GM12878 (cell line): ENCODE measurements at regions of chr2 and their contacts with region 1.

Region 1: DNA sequence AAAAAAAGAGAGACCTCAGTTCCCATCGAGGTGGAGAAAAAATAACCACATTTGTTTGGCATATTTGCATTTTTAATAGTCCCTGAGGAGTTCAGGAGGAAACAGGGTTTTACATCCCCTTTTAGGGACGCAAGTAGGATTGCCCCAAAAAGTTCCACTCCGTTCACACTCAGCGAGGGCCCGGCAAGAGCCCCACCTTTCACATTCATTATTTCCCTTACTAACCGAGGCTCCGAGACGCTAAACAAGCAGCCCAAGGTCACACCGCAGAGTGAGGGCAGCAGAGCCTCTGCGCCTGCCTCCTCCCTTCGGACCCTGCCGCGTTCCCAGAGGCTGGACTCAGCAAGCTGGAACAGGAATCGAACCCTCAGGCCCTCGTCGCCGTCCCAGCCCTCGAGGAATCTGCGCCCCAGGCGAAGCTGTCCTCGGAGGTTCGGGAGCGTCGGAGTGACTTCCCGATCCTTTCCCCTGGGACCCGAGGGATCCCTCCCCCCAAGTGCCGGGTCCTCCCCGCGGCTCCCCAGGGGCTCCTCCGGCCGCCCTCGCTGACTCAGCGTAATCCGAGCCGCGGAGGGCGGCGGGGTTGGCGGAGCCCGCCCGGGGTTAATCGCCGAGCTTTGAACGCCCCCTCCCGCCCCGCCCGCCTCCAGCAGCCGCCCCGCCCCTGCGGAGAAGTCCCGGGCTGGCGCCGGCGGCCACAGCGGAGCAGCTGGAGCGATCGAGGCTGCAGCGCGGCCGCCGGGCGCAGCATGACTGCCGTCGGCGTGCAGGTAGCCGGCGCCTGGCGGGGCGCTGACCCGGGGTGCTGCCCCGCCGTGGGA is at the start of gene TMEM37:
- DNase-seq: peak; percentile 90
- ATAC-seq: peak; percentile 83
- H3K4me3 ChIP-seq: peak within 1 kb of the TSS; percentile 64
- H3K27ac ChIP-seq: peak within 1 kb of the TSS; percentile 53; the same call in 1 of the 2 replicates
- H3K4me1 ChIP-seq: peaks cover 17% of the 10 kb centered on the region
- H3K27me3 ChIP-seq: peaks cover 0 to 5% of the 10 kb centered on the region in 2 experiments; a peak in 2 of 4 replicates
- CTCF ChIP-seq: no peak
- EP300 ChIP-seq: peak; percentile 81 to 85; a peak in 3 of 4 replicates
- POLR2A ChIP-seq: no peak
- RAD21 ChIP-seq: no peak
- polyA plus RNA-seq, gene TMEM37: 0.07 TPM in 1 of 2 experiments, not detected in the other

Region 2: DNA sequence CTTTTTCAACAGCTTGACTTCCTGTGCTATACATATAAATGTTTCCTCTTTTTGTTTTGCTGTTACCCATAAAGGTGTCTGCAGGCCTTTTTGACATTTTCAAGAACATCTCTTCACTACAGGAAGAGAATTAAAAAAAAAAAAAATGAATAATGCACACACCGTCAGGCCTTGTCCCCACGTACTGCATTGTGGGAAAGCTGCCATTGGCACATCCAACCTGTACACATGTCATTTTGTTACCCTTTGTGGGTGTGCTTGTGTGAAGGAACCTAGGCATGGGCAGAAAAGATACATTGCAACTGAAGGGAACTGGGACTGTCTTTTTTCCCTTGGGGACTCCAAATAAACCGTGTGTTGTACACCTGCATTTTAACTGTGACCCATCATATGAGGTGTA is 16.5 kb before region 1 on chr2:
- CTCF ChIA-PET with region 1: interaction called, 9 read pairs
- POLR2A ChIA-PET with region 1: interaction called, 5 read pairs
- RAD21 ChIA-PET with region 1: interaction called, 9 read pairs
- SMC1A ChIA-PET with region 1: interaction called, 23 read pairs
- in situ Hi-C with region 1: no loop called
- intact Hi-C with region 1: no loop called
- DNase-seq: no peak
- ATAC-seq: no peak
- H3K4me3 ChIP-seq: no peak overlapping the region
- H3K27ac ChIP-seq: no peak overlapping the region
- H3K4me1 ChIP-seq: no peaks in the 10 kb centered on the region
- H3K27me3 ChIP-seq: no peaks in the 10 kb centered on the region
- CTCF ChIP-seq: no peak
- EP300 ChIP-seq: no peak
- POLR2A ChIP-seq: no peak
- RAD21 ChIP-seq: no peak